ENCODE measurements at regions of chr18 and their contacts with region 1.

Region 1: DNA sequence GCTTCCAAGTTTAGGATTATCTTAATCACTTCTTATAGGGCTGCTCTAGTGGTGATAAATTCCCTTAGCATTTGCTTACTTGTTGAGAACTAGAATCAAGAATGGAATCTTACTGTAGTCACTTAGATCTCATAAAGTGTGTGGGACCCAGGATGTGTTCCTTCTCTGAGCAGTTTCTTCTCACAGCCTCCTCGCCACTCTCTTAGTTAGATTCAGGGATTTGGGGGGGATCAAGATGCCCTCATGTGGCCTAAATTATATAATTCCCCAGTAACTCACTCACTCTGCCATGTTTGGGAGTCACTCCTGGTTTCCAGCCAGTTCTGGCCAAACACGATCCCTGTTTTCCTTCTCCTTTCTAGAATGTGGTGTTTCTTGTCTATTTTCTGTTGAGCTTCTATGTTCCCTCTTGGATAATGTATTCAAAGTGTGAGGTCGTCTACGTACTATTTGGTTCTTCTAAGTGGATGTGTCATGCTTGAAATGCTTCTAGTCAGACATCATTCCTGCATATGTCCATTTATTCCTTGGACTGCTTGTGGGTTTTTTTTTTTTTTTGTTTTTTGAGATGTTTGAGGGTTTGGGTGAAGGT is 414.9 kb upstream of the SYT4 start:
- DNase-seq: no peak
- ATAC-seq: no peak

Region 2: DNA sequence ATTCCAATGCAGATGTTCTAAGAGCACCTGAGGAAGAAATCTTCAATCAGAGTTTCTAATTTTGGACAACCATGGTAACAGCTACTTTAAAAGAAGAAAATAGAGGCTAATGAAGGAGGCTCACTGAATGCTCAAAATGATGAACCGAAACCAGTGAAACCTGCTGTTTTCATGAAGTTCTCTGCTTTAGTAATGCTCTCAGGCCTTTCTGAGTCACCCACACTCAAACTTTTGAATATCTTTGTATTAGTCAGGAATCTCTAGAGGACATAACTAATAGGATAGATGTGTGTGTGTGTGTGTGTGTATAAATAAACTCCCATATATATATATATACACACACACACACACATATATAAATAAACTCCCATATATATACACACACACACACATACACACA is 499.8 kb before region 1 on chr18:
- intact Hi-C with region 1: no loop called
- DNase-seq: no peak
- ATAC-seq: no peak

Region 3: GRCh38 chr18:43634994-43635393 is 57.2 kb before region 1 on chr18:
- intact Hi-C with region 1: no loop called
- DNase-seq: no peak
- ATAC-seq: no peak

Region 4: DNA sequence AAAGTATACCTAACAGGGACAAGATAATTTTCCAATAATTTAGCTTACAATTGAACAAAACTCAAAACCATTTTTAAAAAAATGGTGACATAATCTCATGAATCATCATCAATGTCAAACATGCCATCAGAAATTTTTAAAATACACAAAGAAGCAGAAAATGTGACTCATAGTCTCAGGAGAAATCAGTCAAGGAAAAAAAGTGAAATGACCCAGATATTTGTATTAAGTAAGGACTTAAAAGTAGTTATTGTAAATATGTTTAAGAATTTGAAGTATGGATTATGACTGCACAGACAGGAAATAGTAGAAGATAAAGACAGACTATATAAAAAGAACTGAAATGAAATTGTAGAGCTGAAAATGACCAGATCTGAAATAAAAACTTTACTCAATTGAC is 59.0 kb after region 1 on chr18:
- intact Hi-C with region 1: loop called (anchors 10 kb)
- DNase-seq: no peak
- ATAC-seq: no peak

Measured in Right ventricle myocardium superior (tissue), 1 donor.